ENCODE measurements at regions of chr5 and their contacts with region 1.

Region 1: GRCh38 chr5:151252762-151253604 is at the start of gene GM2A:
- DNase-seq: peak; percentile 92
- ATAC-seq: peak; percentile 83
- H3K4me3 Mint-ChIP-seq: peak within 1 kb of the TSS; percentile 96
- H3K27ac Mint-ChIP-seq: peak within 1 kb of the TSS; percentile 96
- H3K4me1 Mint-ChIP-seq: peaks cover 65% of the 10 kb centered on the region
- H3K27me3 Mint-ChIP-seq: no peaks in the 10 kb centered on the region
- CTCF ChIP-seq: no peak
- total RNA-seq, gene GM2A: 51.3 and 53.1 TPM in 2 replicates

Region 2: DNA sequence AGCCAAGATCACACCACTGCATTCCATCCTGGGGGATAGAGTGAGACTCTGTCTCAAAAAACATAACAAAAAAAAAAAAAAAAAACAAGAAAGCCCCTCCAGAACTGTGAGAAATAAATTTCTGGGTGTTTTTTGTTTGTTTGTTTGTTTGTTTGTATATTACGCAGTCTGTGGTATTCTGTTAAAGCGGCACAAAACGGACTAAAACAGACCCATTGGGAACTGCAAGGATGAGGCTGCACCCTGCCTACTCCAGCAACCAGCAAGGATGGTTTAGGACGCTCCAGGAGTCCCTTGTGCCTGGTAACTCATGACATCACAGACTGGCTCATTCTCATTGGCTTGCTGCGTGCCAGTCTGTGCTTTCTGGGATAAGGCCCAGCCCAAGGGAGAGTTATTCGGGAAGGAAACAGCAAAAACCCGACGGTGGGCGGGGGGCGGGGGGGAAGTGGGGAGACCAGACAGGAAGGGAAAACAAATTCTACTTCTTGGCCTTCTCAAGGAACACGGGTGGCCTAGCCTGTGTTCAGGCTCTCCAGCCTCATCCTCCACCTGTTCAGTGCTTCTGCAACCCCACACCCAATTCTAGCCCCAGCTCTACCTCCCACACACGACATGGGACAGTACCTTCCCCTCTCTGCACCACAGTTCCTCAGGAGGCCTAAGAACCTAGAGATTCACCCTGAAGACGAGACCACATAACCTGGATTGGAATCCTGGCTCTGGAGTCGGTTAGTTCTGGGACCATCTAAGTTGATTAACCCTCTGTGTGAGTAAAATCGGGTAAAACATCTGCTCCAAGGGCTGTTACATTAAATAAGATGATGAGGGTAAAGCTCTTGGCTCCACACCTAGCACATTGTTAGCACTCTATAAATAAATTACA is 843.1 kb before region 1 on chr5:
- CTCF ChIA-PET with region 1: no interaction called
- POLR2A ChIA-PET with region 1: interaction called, 4 read pairs
- intact Hi-C with region 1: loop called (anchors 2 kb)
- DNase-seq: no peak
- ATAC-seq: no peak
- H3K4me3 Mint-ChIP-seq: peak overlapping the region; percentile 98
- H3K27ac Mint-ChIP-seq: peak overlapping the region; percentile 100
- H3K4me1 Mint-ChIP-seq: peaks cover 65% of the 10 kb centered on the region
- H3K27me3 Mint-ChIP-seq: peaks cover 2% of the 10 kb centered on the region
- CTCF ChIP-seq: no peak

Region 3: DNA sequence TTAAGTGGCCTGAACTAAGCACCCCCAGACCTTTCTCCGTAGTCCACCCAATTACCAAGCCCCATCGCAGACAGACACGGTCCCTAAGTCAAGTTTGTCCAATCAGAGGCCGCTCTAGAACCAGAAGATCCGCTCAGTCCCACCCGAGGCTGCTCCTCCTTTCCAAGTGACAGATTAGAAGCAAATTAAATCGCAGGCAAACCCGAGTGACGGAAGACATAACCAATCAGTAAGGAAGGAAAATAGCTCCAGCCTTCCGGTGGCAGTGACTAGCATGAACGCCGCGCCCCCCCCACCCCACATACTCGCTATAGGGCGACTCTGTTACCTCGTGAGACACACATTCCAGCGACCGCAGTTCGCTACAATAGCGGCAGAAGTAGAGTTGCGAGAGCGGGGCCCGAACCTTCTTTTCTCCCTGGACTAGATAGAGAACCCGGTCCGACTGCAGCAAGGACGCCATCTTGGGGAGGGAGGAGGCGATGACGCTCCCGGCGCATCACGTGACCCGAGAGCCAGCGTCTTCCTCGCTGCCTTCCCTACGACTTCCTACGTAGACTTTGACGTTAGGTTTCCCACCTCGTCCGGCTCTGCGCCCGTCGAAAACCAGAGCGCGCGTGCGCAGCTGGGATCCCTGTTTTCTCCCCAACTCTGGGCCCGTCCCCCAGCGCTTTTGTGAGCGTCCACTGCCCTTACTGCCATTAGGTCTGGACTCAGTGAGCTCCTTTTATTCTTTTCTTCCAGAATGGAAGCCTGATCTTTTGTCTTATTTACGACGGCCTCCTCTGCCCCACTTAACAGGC is 494.3 kb before region 1 on chr5 and contains the start of gene DCTN4:
- CTCF ChIA-PET with region 1: no interaction called
- POLR2A ChIA-PET with region 1: interaction called, 4 read pairs
- intact Hi-C with region 1: loop called (anchors 2 kb)
- DNase-seq: peak; percentile 87
- ATAC-seq: peak; percentile 93
- H3K4me3 Mint-ChIP-seq: no peak within 1 kb of the TSS
- H3K27ac Mint-ChIP-seq: no peak within 1 kb of the TSS
- H3K4me1 Mint-ChIP-seq: peaks cover 17% of the 10 kb centered on the region
- H3K27me3 Mint-ChIP-seq: peaks cover 9% of the 10 kb centered on the region
- CTCF ChIP-seq: no peak
- total RNA-seq, gene DCTN4: 49.0 and 49.8 TPM in 2 replicates

Region 4: GRCh38 chr5:151157426-151158286 is 95.3 kb before region 1 on chr5 and contains the start of gene ANXA6:
- CTCF ChIA-PET with region 1: interaction called, 3 read pairs
- POLR2A ChIA-PET with region 1: interaction called, 12 read pairs
- intact Hi-C with region 1: no loop called
- DNase-seq: peak; percentile 62
- ATAC-seq: peak; percentile 72
- H3K4me3 Mint-ChIP-seq: peak within 1 kb of the TSS; percentile 91
- H3K27ac Mint-ChIP-seq: peak within 1 kb of the TSS; percentile 94
- H3K4me1 Mint-ChIP-seq: peaks cover 77% of the 10 kb centered on the region
- H3K27me3 Mint-ChIP-seq: no peaks in the 10 kb centered on the region
- CTCF ChIP-seq: no peak
- total RNA-seq, gene ANXA6: 367 and 379 TPM in 2 replicates

Region 5: DNA sequence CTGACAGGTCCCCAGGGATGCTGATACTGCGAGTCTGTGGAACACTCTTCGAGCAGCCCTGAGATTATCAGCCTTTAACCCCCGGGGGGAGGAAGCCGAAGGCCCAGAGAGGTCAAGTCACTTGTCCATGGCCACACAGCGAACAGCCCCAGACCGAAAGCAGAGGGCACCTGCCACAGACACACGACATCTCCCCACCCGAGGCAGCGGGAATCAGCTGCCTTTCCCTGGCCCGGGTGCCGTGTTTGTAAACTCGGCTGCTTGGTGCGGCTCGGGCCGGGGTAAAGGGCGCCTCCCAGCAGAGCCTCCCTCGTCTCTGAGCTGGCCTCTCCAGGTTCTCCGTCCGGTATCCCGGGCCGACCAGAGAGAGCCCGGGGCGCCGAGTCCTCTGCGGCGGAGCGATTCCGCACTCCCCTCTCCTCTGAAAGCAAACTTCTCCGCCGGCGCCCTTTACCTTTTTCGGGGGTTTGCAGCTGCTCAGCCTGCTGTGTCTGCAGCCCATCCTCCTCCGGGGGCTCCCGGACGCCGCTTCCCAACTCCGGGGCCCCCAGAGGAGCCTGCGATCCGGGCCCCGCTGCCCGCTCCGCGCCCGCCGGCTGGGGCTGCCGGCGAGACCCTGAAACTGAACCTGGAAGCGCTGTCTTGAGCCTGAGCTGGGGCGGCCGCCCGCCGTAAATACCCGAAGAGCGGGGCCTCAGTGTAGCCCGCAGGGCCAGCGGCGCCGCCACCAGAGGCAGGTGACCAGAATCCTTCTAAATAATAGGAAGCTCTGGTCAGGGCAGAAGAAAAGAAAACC is 29.3 kb before region 1 on chr5 and contains the start of gene CCDC69:
- CTCF ChIA-PET with region 1: no interaction called
- POLR2A ChIA-PET with region 1: interaction called, 41 read pairs
- intact Hi-C with region 1: no loop called
- DNase-seq: peak; percentile 56
- ATAC-seq: peak; percentile 51
- H3K4me3 Mint-ChIP-seq: peak within 1 kb of the TSS; percentile 91
- H3K27ac Mint-ChIP-seq: peak within 1 kb of the TSS; percentile 93
- H3K4me1 Mint-ChIP-seq: peaks cover 73% of the 10 kb centered on the region
- H3K27me3 Mint-ChIP-seq: no peaks in the 10 kb centered on the region
- CTCF ChIP-seq: no peak
- total RNA-seq, gene CCDC69: 98.9 and 109 TPM in 2 replicates

Region 6: DNA sequence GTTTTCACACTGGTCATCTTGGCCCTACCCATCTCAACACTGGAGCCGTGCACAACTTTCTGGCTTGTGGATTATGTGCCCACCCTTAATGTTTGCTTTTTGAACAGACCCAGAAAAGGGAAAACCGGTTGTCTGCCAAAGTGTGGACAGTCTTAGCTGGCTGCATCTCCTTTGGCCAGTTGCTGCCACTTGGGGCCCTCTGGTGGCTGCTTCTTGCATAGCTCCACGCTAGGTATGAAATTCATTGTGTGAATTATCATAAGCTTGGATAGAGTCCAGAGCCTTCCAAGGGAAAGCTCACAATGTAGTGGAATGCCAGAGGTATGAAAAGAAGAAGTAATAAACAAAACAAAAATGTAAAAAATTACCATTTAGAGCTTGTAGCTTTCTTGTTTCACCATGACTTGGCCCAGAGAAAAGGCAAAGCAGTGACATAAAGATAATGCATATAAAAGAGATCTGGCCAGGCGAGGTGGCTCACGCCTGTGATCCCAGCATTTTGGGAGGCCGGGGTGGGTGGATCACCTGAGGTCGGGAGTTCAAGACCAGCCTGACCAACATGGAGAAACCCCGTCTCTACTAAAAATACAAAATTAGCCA is 63.1 kb after region 1 on chr5:
- CTCF ChIA-PET with region 1: interaction called, 5 read pairs
- POLR2A ChIA-PET with region 1: interaction called, 3 read pairs
- intact Hi-C with region 1: loop called (anchors 2 kb)
- DNase-seq: peak; percentile 40
- ATAC-seq: peak; percentile 83
- H3K4me3 Mint-ChIP-seq: no peak overlapping the region
- H3K27ac Mint-ChIP-seq: no peak overlapping the region
- H3K4me1 Mint-ChIP-seq: peaks cover 11% of the 10 kb centered on the region
- H3K27me3 Mint-ChIP-seq: peaks cover 5% of the 10 kb centered on the region
- CTCF ChIP-seq: peak; percentile 64

Region 7: GRCh38 chr5:151637676-151638075 is 384.7 kb after region 1 on chr5:
- CTCF ChIA-PET with region 1: no interaction called
- POLR2A ChIA-PET with region 1: no interaction called
- intact Hi-C with region 1: no loop called
- DNase-seq: no peak
- ATAC-seq: no peak
- H3K4me3 Mint-ChIP-seq: no peak overlapping the region
- H3K27ac Mint-ChIP-seq: no peak overlapping the region
- H3K4me1 Mint-ChIP-seq: no peaks in the 10 kb centered on the region
- H3K27me3 Mint-ChIP-seq: peaks cover 14% of the 10 kb centered on the region
- CTCF ChIP-seq: no peak

Region 8: GRCh38 chr5:151659001-151659754 is 406.2 kb after region 1 on chr5:
- CTCF ChIA-PET with region 1: no interaction called
- POLR2A ChIA-PET with region 1: no interaction called
- intact Hi-C with region 1: no loop called
- DNase-seq: peak; percentile 77
- ATAC-seq: peak; percentile 88
- H3K4me3 Mint-ChIP-seq: no peak overlapping the region
- H3K27ac Mint-ChIP-seq: no peak overlapping the region
- H3K4me1 Mint-ChIP-seq: peaks cover 24% of the 10 kb centered on the region
- H3K27me3 Mint-ChIP-seq: peaks cover 14% of the 10 kb centered on the region
- CTCF ChIP-seq: no peak